ENCODE measurements at regions of chr17 and their contacts with region 1.

Region 1: DNA sequence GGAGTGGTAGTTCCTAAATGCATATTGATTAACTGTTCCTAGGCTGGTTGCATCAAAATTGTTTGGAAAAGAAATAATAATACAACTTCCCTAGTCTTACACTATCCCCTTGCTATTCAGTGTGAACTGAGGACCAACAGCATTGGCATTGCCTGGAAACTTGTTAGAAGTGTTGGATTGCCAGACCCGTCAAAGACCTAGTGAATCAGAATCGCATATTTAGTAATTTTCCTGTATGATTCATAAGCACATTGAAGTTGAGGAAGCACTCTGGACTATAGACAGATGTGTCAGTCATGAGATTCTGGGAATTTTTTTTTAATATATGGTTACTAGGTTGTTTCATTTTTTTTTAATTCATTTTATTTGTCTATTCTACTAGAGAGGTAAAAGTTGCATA is 34.7 kb upstream of the KCNJ16 start:
- DNase-seq: no peak
- ATAC-seq: no peak

Region 2: GRCh38 chr17:69981441-69981840 is 58.9 kb before region 1 on chr17:
- intact Hi-C with region 1: loop called in 1 of 2 experiments (anchors 2 kb)
- DNase-seq: no peak
- ATAC-seq: no peak

Region 3: DNA sequence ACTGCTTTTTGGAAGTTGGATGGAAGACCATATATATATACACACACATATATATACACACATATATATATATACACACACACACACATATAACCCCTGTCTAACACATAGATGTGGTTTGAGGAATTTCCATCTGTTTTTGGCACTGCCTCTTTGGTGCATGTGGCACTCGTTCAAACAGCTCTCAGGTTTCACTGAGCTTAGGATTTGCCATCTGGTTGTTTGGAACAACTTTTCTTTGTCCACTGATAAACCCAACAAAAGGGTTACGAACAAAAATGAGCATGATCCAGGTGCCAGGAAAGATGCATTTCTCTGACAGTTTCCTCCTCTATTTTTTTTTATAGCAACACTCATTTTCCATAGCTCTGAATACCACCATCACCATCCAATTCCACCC is 20.1 kb after region 1 on chr17:
- intact Hi-C with region 1: no loop called
- DNase-seq: no peak
- ATAC-seq: no peak

Region 4: GRCh38 chr17:70158180-70158579 is 117.8 kb after region 1 on chr17:
- intact Hi-C with region 1: no loop called
- DNase-seq: no peak
- ATAC-seq: peak in 1 of 2 donors; percentile 54